Astrocyte of the cerebellum (primary cell): ENCODE measurements at regions of chr1 and their contacts with region 1.

Region 1: DNA sequence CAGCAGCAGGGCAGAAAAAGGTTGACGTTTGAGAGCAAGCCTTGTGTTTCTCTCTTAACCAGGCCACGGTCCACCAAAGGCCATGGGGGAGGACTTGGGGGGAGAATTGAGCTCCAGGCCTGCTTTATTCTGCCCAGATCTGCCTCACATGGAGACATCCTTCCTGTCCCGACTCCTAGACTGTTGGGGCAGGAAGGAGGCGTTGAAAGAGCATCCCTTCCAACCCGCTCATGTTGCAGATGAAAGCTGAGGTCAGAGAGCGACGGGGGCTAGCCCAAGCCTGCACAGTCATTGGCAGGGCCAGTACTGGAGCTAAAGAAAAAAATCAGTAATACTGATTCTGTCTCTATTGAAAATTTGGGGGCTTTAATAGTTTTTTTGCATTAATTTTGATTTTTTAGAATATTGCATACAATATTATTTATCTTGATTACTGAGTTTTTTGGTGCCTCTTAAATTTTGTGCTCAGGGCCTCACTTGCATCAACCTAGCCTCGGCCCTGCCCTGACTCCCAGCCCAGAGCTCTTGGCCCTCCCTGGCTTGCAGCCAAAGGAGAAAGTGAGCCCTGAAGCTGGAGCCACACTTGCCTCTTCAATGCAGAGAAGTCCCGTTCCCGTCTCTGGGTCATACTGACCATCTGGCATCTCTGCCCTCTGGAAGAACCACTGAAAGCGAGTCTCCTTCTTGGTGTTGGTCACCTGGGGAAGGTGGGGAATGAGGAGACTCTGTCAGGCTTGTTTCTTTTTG is 46.5 kb downstream of the MYOM3 start:
- DNase-seq: no peak
- H3K4me3 ChIP-seq: no peak overlapping the region
- CTCF ChIP-seq: no peak

Region 2: DNA sequence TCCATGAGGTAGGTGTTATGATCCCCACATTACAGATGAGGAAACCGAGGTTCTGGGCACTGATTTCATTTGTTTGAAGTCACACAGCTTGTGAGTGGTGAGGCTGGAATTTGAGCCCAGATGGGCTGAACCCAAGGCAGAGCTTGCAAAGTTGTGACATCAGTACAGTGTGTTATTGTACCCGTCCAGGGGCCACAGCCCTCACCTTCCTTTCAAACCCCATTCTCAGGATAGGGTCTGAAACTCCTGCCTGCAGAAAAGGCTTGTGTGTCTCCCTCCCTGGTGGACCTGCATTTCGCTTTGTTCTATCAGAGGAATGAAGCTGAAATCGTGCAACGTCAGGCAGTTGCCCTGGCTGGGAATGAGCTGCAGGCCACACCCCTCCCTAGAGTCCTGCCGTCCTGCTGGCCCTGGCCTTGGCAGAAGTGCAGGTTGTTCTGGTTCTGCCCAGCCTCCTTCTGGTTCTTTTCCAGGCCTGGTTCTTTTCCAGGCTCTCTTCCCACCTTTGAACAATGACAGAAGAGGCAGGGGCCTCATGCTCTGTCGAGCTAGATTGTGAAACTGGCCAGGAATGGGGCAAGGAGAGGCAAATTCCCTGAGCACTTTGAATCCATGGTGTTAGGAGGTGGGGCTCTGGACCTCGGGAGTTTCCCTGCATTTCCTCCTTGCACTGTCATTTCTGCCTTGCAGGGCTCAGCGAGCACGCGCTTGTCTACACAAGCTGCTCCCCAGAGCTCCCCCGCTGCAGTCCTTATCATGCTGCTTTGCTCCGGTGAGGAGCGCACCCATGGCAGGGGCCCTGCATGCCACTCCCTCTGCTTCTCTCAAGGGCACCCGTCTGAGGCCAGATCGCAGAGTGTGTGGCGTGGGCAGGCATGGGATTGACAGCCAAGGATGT is 54.6 kb after region 1 on chr1:
- in situ Hi-C with region 1: loop called (anchors 5 kb)
- DNase-seq: no peak
- H3K4me3 ChIP-seq: no peak overlapping the region
- CTCF ChIP-seq: no peak

Region 3: GRCh38 chr1:24133819-24134775 is 68.6 kb after region 1 on chr1:
- in situ Hi-C with region 1: no loop called
- DNase-seq: no peak
- H3K4me3 ChIP-seq: no peak overlapping the region
- CTCF ChIP-seq: no peak